ENCODE measurements at regions of chr10 and their contacts with region 1.

Region 1: GRCh38 chr10:71795248-71795647 is 21.9 kb upstream of the VSIR start:
- DNase-seq: no peak
- H3K4me3 ChIP-seq: no peak overlapping the region
- H3K27ac ChIP-seq: no peak overlapping the region
- H3K4me1 ChIP-seq: no peaks in the 10 kb centered on the region
- H3K27me3 ChIP-seq: no peaks in the 10 kb centered on the region
- CTCF ChIP-seq: no peak
- POLR2A ChIP-seq: no peak

Region 2: DNA sequence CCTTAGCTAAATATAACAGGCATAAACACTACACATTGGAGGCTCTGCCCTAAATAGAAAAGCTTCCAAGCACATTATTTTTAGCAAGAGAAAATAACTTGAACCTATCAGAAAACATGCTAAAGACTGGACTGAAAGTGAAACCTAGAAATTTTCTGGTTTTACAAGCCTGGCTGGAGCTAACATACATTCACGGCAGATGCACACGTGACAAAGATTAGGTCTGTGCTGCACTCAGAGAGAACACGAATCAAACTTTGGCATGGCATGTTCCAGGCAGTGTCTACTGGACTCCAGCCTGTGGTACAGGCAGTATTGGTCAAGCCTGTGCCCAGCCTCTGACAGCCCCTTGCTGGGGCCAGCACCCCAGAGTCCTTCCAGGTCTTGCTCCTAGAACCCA is 812.8 kb before region 1 on chr10:
- intact Hi-C with region 1: loop called (anchors 5 kb)
- DNase-seq: no peak
- H3K4me3 ChIP-seq: no peak overlapping the region
- H3K27ac ChIP-seq: no peak overlapping the region
- H3K4me1 ChIP-seq: no peaks in the 10 kb centered on the region
- H3K27me3 ChIP-seq: no peaks in the 10 kb centered on the region
- CTCF ChIP-seq: no peak
- POLR2A ChIP-seq: no peak

Region 3: GRCh38 chr10:71187600-71187999 is 607.6 kb before region 1 on chr10:
- intact Hi-C with region 1: loop called (anchors 5 kb)
- DNase-seq: no peak
- H3K4me3 ChIP-seq: no peak overlapping the region
- H3K27ac ChIP-seq: no peak overlapping the region
- H3K4me1 ChIP-seq: no peaks in the 10 kb centered on the region
- H3K27me3 ChIP-seq: no peaks in the 10 kb centered on the region
- CTCF ChIP-seq: no peak
- POLR2A ChIP-seq: no peak

Region 4: GRCh38 chr10:71569775-71570588 is 225.3 kb before region 1 on chr10:
- intact Hi-C with region 1: no loop called
- DNase-seq: peak; percentile 71 to 78
- H3K4me3 ChIP-seq: no peak overlapping the region
- H3K27ac ChIP-seq: no peak overlapping the region
- H3K4me1 ChIP-seq: no peaks in the 10 kb centered on the region
- H3K27me3 ChIP-seq: no peaks in the 10 kb centered on the region
- CTCF ChIP-seq: peak; percentile 81 to 93 (median 86)
- POLR2A ChIP-seq: no peak

Region 5: DNA sequence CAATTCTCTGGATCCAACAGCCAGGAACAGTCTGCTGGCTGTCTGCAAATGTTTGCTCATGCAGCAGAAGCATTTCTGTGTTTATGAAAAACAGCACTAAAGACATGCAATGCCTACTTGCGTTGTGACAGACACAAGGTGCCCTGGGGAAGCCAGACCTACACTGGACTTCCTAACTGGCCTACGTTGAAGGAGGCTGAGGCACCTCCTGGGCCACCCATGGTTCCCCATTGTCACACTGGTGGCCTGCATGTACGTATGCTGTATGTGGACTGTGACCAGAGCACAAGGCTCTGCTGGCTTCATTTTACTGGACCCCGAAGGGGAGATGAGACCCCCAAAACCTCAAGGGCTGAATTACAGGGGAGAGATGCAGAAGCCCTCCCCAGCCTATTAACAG is 28.1 kb after region 1 on chr10:
- intact Hi-C with region 1: loop called (anchors 1 kb)
- DNase-seq: no peak
- H3K4me3 ChIP-seq: no peak overlapping the region
- H3K27ac ChIP-seq: no peak overlapping the region
- H3K4me1 ChIP-seq: no peaks in the 10 kb centered on the region
- H3K27me3 ChIP-seq: no peaks in the 10 kb centered on the region
- CTCF ChIP-seq: no peak
- POLR2A ChIP-seq: no peak